Endothelial cell of umbilical vein (primary cell): ENCODE measurements at regions of chr3 and their contacts with region 1.

Region 1: GRCh38 chr3:185585859-185586685 is at the start of gene SENP2:
- DNase-seq: peak; percentile 100
- H3K4me3 ChIP-seq: peak within 1 kb of the TSS; percentile 36 to 93 (median 63)
- H3K27ac ChIP-seq: peak within 1 kb of the TSS; percentile 72
- H3K4me1 ChIP-seq: peaks cover 7% of the 10 kb centered on the region
- H3K27me3 ChIP-seq: peaks cover 0 to under 1% of the 10 kb centered on the region in 2 experiments
- CTCF ChIP-seq: no peak
- POLR2A ChIP-seq: peak; percentile 90
- total RNA-seq, gene SENP2: 38.9 and 40.4 TPM in 2 replicates

Region 2: GRCh38 chr3:185498503-185499396 is 87.3 kb before region 1 on chr3 and contains the start of gene TMEM41A:
- CTCF ChIA-PET with region 1: interaction called, 6 read pairs
- POLR2A ChIA-PET with region 1: interaction called, 4 read pairs
- dilution Hi-C with region 1: no loop called
- intact Hi-C with region 1: loop called (anchors 5 kb)
- DNase-seq: peak; percentile 90
- H3K4me3 ChIP-seq: peak within 1 kb of the TSS; percentile 55 to 93 (median 77)
- H3K27ac ChIP-seq: peak within 1 kb of the TSS; percentile 14
- H3K4me1 ChIP-seq: peaks cover 5% of the 10 kb centered on the region
- H3K27me3 ChIP-seq: peaks cover 2 to 8% of the 10 kb centered on the region in 2 experiments
- CTCF ChIP-seq: no peak
- POLR2A ChIP-seq: peak; percentile 90
- total RNA-seq, gene TMEM41A: 16.0 and 16.8 TPM in 2 replicates

Region 3: DNA sequence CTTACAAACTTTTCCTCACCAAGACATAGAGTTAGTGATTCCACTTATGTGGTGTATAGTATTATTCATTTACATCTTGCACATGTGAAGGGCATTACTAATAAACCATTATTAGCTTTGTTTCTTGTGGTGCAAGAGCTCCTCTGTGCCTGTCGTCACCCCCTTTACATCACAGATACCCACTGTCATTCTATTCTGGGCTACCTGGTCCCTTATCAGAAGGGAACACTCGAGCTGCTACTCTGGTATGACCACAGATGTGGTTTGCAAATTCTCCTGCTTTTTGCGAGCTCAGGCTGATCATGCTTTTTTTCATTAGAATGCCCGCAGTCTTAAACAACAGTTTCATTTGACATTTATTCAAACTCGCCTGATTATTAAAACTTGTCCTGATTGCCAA is 13.9 kb before region 1 on chr3:
- CTCF ChIA-PET with region 1: interaction called, 16 read pairs
- POLR2A ChIA-PET with region 1: interaction called, 3 read pairs
- dilution Hi-C with region 1: no loop called
- intact Hi-C with region 1: no loop called
- DNase-seq: no peak
- H3K4me3 ChIP-seq: no peak overlapping the region
- H3K27ac ChIP-seq: no peak overlapping the region
- H3K4me1 ChIP-seq: no peaks in the 10 kb centered on the region
- H3K27me3 ChIP-seq: no peaks in the 10 kb centered on the region
- CTCF ChIP-seq: no peak
- POLR2A ChIP-seq: no peak

Region 4: GRCh38 chr3:185824476-185825378 is 238.7 kb after region 1 on chr3 and contains the start of gene IGF2BP2:
- CTCF ChIA-PET with region 1: no interaction called
- POLR2A ChIA-PET with region 1: no interaction called
- dilution Hi-C with region 1: no loop called
- intact Hi-C with region 1: loop called (anchors 5 kb)
- DNase-seq: peak; percentile 84
- H3K4me3 ChIP-seq: peak within 1 kb of the TSS; percentile 87 to 100 (median 98)
- H3K27ac ChIP-seq: peak within 1 kb of the TSS; percentile 84
- H3K4me1 ChIP-seq: peaks cover 32% of the 10 kb centered on the region
- H3K27me3 ChIP-seq: no peaks in the 10 kb centered on the region
- CTCF ChIP-seq: peak in 1 of 2 donors; percentile 11
- POLR2A ChIP-seq: peak; percentile 69
- total RNA-seq, gene IGF2BP2: 122 and 130 TPM in 2 replicates

Region 5: GRCh38 chr3:185924375-185924774 is 338.3 kb after region 1 on chr3:
- CTCF ChIA-PET with region 1: no interaction called
- POLR2A ChIA-PET with region 1: no interaction called
- dilution Hi-C with region 1: no loop called
- intact Hi-C with region 1: no loop called
- DNase-seq: no peak
- H3K4me3 ChIP-seq: no peak overlapping the region
- H3K27ac ChIP-seq: no peak overlapping the region
- H3K4me1 ChIP-seq: peaks cover 23% of the 10 kb centered on the region
- H3K27me3 ChIP-seq: no peaks in the 10 kb centered on the region
- CTCF ChIP-seq: no peak
- POLR2A ChIP-seq: no peak